ENCODE measurements at regions of chr19 and their contacts with region 1.

Region 1: DNA sequence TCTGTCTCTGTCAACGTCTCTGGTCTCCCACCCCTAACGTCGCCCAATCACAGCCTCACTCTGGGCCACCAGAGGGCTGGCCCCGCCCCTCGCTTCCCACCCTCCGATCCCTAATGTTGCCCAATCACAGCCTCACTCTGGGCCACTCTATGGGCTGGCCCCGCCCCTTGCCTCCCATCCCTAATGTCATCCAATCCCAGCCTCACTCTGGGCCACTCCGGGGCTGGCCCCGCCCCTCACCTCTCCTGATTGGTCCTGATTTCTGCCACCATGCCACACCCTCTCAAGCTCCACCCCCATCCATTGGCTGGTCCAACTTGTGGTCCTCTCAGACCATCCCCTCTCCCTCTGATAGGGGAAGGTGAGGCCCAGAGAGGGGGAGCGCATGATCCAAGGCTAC is 24.9 kb downstream of the CELF5 start:
- DNase-seq: peak; percentile 22
- ATAC-seq: no peak; the same call in 1 of the 2 replicates
- H3K4me3 ChIP-seq: no peak overlapping the region
- H3K27ac ChIP-seq: no peak overlapping the region
- H3K4me1 ChIP-seq: no peaks in the 10 kb centered on the region
- H3K27me3 ChIP-seq: no peaks in the 10 kb centered on the region
- CTCF ChIP-seq: no peak

Region 2: DNA sequence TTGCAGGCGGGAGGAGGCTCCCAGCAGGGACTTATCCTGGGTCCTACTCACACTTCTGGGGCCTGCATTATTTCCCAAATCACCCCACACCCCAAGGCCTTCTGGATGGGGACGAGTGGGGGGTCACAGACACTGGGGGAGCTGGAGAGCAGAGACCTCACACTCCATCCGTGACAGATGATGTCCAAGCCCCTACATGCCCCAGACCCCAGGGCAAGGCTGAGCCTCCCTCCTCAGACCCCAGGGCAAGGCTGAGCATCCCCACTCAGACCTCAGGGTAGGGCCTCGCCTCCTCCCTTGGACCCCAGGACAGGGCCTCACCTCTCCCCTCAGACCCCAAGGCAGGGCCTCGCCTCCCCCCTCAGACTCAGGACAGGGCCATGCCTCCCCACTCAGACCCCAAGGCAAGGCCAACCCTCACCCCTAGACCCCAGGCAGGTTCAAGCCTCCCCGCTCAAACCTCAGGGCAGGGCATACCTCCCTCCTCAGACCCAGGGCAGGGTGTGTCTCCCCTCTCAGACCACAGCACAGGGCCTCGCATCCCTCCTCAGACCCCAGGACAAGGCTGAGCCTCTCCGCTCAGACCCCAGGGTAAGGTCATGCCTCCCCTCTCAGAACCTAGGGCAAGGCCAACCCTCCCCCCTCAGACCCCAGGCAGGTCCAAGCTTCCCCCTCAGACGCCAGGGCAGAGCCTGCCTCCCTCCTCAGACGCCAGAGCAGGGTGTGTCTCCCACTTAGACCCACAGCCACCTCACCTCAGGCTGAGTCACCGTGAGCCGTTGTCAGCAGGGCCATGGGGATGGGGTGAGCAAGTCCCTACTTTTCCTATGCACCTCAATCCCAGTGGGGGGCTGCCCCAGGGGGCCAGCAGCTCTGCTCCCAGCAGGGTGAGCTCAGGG is 72.6 kb before region 1 on chr19:
- CTCF ChIA-PET with region 1: no interaction called
- POLR2A ChIA-PET with region 1: no interaction called
- intact Hi-C with region 1: no loop called
- DNase-seq: peak; percentile 86
- ATAC-seq: peak; percentile 98
- H3K4me3 ChIP-seq: peak overlapping the region; percentile 27; the same call in 1 of the 2 replicates
- H3K27ac ChIP-seq: peak overlapping the region; percentile 98
- H3K4me1 ChIP-seq: peaks cover 25% of the 10 kb centered on the region
- H3K27me3 ChIP-seq: no peaks in the 10 kb centered on the region
- CTCF ChIP-seq: no peak

Region 3: DNA sequence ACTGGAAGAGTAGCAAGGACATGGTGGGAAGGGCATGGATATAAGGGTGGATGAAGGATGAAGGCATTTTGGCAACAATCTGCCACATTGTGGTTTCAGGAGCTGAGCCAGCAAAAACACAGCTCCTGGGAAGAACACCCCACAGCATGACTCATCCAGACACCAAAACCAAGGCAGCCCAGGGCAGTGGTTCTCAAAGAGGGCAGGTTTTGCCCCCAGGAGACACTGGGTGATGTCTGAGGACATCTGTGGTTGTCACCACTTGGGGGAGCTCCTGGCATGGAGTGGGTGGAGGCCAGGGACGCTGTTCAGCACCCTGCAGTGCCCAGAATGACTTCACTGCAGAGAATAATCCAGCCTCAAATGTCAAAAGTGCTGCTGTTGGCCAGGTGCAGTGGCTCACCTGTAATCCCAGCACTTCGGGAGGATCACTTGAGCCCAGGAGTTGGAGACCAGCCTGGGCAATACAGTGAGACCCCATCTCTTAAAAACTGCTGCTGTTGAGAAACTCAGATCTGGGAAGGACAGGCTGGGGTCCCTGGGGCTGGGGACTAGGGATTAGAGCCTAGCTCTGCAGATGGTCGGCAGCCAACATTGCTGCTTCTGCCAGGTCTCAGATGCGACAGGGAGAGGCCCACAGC is 603.3 kb after region 1 on chr19:
- CTCF ChIA-PET with region 1: interaction called, 10 read pairs
- POLR2A ChIA-PET with region 1: no interaction called
- intact Hi-C with region 1: no loop called
- DNase-seq: peak; percentile 88
- ATAC-seq: peak; percentile 79
- H3K4me3 ChIP-seq: no peak overlapping the region
- H3K27ac ChIP-seq: no peak overlapping the region; the same call in 1 of the 2 replicates
- H3K4me1 ChIP-seq: no peaks in the 10 kb centered on the region
- H3K27me3 ChIP-seq: no peaks in the 10 kb centered on the region
- CTCF ChIP-seq: peak; percentile 65